ENCODE measurements at regions of chr10 and their contacts with region 1.

Region 1: DNA sequence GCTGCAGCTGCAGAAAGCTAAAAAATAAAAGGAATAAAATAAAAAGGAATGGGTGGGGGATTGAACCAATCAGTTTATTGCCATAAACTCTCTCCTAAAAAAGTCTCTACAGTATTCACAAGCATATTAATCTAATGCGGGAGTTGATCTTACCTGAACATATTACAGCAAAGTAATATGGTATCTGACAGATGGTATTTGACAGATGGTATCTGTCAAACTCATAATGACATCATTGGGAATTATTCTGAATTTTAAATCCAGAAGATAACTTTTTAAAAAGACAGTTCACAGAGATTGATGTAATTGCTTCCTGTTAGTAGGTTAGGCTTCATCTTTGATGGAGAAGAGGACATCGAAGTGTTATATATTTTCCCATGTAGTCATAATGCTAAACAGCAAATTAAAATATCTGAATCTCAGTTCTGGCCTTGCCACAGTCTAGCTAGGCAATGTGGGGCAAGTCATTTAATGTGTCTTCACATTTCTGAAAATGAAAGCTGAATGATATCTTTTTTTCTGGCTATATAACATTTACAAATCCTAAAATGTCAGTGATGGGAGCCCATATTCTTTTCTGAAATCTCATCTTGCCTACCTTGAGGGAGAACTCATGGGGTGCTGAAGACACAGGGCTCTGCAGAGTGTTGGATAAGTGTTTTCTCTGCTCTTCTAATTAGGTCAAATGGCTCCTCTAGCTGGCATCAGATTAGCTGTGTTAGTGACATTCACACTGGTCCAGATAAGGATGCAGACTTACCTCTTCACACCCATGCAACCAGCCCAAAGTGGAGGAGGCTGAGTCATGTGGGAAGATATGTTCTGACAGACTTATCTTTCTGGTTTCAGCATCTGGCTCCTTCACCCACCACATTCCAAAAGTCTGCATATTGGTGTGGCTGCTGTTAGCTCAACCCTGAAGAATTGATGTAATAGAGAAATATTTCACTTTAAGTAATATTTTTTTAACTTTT is 2.1 kb upstream of the LIPM start:
- DNase-seq: no peak
- ATAC-seq: no peak
- H3K4me3 ChIP-seq: no peak overlapping the region
- H3K27ac ChIP-seq: no peak overlapping the region
- H3K4me1 ChIP-seq: no peaks in the 10 kb centered on the region
- H3K27me3 ChIP-seq: peaks cover 0 to 5% of the 10 kb centered on the region in 2 donors
- CTCF ChIP-seq: no peak

Region 2: DNA sequence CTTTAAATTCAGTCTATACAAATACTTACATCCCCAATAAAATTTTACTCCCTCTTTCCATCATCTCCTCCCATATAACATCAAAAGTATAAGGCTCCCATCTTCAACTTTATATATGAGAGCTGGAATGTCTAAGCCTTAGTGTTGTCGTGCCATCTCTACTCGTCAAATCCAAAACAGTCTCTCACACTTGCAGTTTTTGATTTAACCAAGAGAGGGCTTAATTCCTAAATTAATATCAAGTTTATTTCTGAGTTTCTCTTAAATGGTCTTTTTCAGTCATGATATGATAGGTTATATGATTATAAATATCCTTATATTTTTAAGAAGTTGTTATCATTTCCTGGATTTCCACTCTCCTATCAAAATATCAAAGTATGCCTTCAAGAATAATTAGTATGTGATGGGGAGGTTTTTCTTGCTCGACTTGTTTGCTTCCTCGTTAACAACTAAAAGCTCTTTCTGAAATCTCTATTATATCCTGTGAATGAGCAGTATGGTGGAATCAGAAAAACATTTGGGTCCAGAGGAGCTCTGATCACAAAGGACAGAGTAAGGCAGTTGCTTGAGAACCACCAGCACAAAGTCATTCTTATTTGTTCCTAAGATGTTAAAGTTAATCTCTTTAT is 106.9 kb before region 1 on chr10:
- intact Hi-C with region 1: loop called in 1 of 2 experiments (anchors 10 kb)
- DNase-seq: no peak
- ATAC-seq: no peak
- H3K4me3 ChIP-seq: no peak overlapping the region
- H3K27ac ChIP-seq: no peak overlapping the region
- H3K4me1 ChIP-seq: no peaks in the 10 kb centered on the region
- H3K27me3 ChIP-seq: no peaks in the 10 kb centered on the region
- CTCF ChIP-seq: no peak

Region 3: DNA sequence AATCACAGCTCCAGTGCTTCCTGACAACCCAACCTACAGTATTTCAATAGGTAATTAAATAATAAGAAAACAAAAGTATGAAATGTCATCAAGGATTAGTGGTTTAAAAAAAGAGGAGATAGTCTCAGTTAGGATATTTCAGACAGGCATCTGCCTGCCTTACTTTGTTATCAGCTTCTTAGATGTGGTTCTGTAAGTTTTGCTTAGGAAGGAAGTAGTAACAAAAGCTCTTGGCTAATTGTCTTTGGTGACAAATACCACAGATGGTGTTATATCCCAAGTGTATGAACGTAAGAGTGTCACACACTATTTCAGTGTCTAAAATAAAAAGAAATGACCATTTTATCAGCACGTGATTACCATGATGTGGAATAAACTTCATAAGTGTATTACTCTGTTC is 161.9 kb after region 1 on chr10:
- intact Hi-C with region 1: no loop called
- DNase-seq: no peak
- ATAC-seq: no peak
- H3K4me3 ChIP-seq: no peak overlapping the region
- H3K27ac ChIP-seq: no peak overlapping the region
- H3K4me1 ChIP-seq: peaks cover 3 to 7% of the 10 kb centered on the region in 2 donors
- H3K27me3 ChIP-seq: no peaks in the 10 kb centered on the region
- CTCF ChIP-seq: no peak

Measured in left lung (tissue), 14 donors.